ENCODE measurements at regions of chr3 and their contacts with region 1.

Region 1: GRCh38 chr3:179181021-179181472 is 32.9 kb downstream of the PIK3CA start:
- DNase-seq: no peak
- ATAC-seq: no peak
- H3K4me3 ChIP-seq: no peak overlapping the region
- H3K4me3 Mint-ChIP-seq: peak overlapping the region in 2 of 10 donors; percentile 19 to 34
- H3K27ac ChIP-seq: no peak overlapping the region
- H3K27ac Mint-ChIP-seq: no peak overlapping the region
- H3K4me1 ChIP-seq: peaks cover 7 to 27% of the 10 kb centered on the region in 2 donors
- H3K4me1 Mint-ChIP-seq: peaks cover 25 to 59% (median 45%) of the 10 kb centered on the region in 7 donors
- H3K27me3 ChIP-seq: no peaks in the 10 kb centered on the region
- H3K27me3 Mint-ChIP-seq: no peaks in the 10 kb centered on the region

Region 2: GRCh38 chr3:179196098-179196497 is 15.1 kb after region 1 on chr3:
- CTCF ChIA-PET with region 1: no interaction called
- POLR2A ChIA-PET with region 1: interaction called, 4 read pairs
- intact Hi-C with region 1: loop called in 1 of 2 experiments (anchors 2 kb)
- DNase-seq: peak in 7 of 9 donors; percentile 49 to 72 (median 53)
- ATAC-seq: peak; percentile 78
- H3K4me3 ChIP-seq: no peak overlapping the region
- H3K4me3 Mint-ChIP-seq: peak overlapping the region in 5 of 10 donors; percentile 21 to 79 (median 50)
- H3K27ac ChIP-seq: no peak overlapping the region
- H3K27ac Mint-ChIP-seq: peak overlapping the region in 8 of 9 donors; percentile 12 to 88 (median 53)
- H3K4me1 ChIP-seq: peaks cover 4 to 23% of the 10 kb centered on the region in 2 donors
- H3K4me1 Mint-ChIP-seq: peaks cover 22 to 67% (median 63%) of the 10 kb centered on the region in 7 donors
- H3K27me3 ChIP-seq: no peaks in the 10 kb centered on the region
- H3K27me3 Mint-ChIP-seq: no peaks in the 10 kb centered on the region

Measured in naive thymus-derived CD4-positive, alpha-beta T cell (primary cell).